ENCODE measurements at regions of chr12 and their contacts with region 1.

Region 1: DNA sequence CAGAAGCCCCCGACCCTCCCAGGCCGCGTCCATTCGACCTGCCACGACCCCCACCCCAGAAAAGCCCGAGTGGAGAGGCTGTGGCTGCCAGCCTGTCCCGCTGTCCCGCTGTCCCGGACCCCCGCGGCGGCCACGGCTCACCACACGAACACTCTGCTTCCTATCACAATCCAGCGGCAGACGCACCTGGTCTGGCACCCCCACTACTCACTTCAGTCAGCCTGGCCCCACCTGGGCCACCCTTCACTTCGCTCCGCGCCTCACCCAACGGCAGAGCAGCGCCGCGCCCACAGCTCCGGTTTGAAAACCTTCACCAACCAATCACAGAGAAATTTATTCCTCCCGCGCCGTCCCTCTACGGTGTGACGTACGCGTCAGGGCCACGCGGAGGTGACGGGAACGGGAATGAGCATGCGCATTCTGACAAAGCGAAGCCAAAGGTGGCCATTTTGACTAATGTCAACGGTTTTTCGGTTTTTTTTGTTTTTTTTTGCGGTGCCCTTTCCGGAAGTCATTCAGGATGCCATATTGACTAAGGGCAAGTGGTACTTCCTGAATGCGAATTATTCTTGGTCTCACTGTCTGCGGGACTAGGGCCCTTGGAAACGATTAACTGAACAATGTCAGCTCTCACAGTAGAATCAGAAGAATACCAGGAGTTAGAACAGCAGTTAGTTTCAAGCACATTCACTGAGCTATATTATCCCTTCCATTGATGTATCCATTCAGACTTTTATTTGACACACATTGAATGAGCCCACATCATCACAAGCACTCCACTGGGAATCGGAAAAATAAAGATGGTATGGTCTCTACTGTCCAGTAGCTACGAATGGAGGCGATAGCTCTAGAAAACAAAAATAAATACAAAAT is at the start of gene RACGAP1:
- DNase-seq: peak; percentile 77 to 98 (median 97)
- ATAC-seq: peak; percentile 99
- H3K4me3 ChIP-seq: peak within 1 kb of the TSS; percentile 81
- H3K4me3 Mint-ChIP-seq: peak within 1 kb of the TSS; percentile 90 to 99 (median 96)
- H3K27ac ChIP-seq: peak within 1 kb of the TSS; percentile 73
- H3K27ac Mint-ChIP-seq: peak within 1 kb of the TSS; percentile 38 to 97 (median 90)
- H3K4me1 ChIP-seq: peaks cover 0 to 12% of the 10 kb centered on the region in 2 donors
- H3K4me1 Mint-ChIP-seq: peaks cover 10 to 43% (median 18%) of the 10 kb centered on the region in 7 donors
- H3K27me3 ChIP-seq: no peaks in the 10 kb centered on the region
- H3K27me3 Mint-ChIP-seq: peaks cover 0 to 3% (median 0%) of the 10 kb centered on the region in 5 donors
- total RNA-seq, gene RACGAP1: 4.2 to 111 (median 8.0) TPM

Region 2: GRCh38 chr12:49366652-49367380 is 658.6 kb before region 1 on chr12:
- CTCF ChIA-PET with region 1: interaction called, 3 read pairs
- POLR2A ChIA-PET with region 1: no interaction called
- intact Hi-C with region 1: loop called in 1 of 2 experiments (anchors 1 kb)
- DNase-seq: peak; percentile 72 to 95 (median 82)
- ATAC-seq: peak; percentile 90
- H3K4me3 ChIP-seq: peak overlapping the region; percentile 90
- H3K4me3 Mint-ChIP-seq: peak overlapping the region; percentile 71 to 97 (median 88)
- H3K27ac ChIP-seq: peak overlapping the region; percentile 87
- H3K27ac Mint-ChIP-seq: peak overlapping the region; percentile 65 to 97 (median 94)
- H3K4me1 ChIP-seq: peaks cover 0 to 15% of the 10 kb centered on the region in 2 donors
- H3K4me1 Mint-ChIP-seq: peaks cover 11 to 39% (median 31%) of the 10 kb centered on the region in 7 donors
- H3K27me3 ChIP-seq: no peaks in the 10 kb centered on the region
- H3K27me3 Mint-ChIP-seq: peaks cover 0 to 2% (median 0%) of the 10 kb centered on the region in 5 donors

Region 3: DNA sequence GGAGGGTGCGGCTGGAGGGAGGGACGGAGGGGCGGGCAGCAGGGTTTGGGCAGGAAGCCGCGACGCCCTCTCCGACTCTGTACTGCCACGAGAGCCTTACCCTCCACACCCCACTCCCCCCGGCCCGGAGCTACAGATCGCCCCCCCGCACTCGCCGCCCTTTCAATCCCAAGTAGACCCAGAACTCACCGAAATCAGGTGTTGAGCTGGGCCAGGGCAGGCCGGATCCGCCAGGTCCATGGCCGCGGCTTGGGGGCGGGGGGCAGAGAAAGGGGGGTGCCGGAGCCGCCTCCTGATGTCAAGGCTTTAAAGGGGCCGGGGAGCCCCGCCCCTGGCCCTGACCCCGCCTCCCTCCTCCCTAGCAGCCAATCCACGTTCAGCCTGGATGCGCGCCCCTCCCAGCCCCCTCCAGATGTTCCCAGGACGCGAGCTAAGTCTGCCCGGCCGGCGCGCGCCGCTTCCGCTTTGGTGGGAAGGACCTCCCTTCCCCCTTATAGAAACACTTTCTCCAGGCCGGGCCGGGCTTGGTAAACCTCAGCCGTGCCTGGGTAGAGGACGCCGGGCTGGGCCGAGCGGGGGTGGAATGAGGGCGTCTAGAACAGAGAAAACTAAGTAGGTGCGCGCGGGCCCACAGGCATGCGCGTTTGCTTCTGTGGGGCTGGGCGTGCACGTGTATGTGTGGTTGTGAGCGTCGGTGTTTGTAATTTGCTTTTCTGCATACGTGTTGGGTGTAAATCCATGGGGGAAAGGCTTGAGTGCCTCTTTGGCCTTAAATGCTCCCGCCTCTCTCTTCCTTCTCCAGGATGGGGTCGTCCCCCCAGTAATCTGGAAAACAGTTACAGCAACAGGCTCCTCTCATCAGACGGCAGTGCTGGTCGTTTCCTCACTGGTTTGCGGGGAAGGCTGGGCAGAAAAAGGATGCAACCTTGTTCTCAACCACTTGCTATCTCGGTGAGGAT is 197.0 kb before region 1 on chr12 and contains the start of gene NCKAP5L:
- CTCF ChIA-PET with region 1: no interaction called
- POLR2A ChIA-PET with region 1: no interaction called
- intact Hi-C with region 1: loop called (anchors 1 to 5 kb)
- DNase-seq: peak; percentile 86 to 94 (median 93)
- ATAC-seq: peak; percentile 96
- H3K4me3 ChIP-seq: peak within 1 kb of the TSS; percentile 82
- H3K4me3 Mint-ChIP-seq: peak within 1 kb of the TSS; percentile 88 to 99 (median 96)
- H3K27ac ChIP-seq: peak within 1 kb of the TSS; percentile 79
- H3K27ac Mint-ChIP-seq: peak within 1 kb of the TSS; percentile 89 to 99 (median 95)
- H3K4me1 ChIP-seq: peaks cover 8 to 16% of the 10 kb centered on the region in 2 donors
- H3K4me1 Mint-ChIP-seq: peaks cover 7 to 42% (median 30%) of the 10 kb centered on the region in 7 donors
- H3K27me3 ChIP-seq: no peaks in the 10 kb centered on the region
- H3K27me3 Mint-ChIP-seq: peaks cover 0 to 13% (median 0%) of the 10 kb centered on the region in 5 donors
- total RNA-seq, gene NCKAP5L: 4.3 to 27.5 (median 12.0) TPM

Region 4: DNA sequence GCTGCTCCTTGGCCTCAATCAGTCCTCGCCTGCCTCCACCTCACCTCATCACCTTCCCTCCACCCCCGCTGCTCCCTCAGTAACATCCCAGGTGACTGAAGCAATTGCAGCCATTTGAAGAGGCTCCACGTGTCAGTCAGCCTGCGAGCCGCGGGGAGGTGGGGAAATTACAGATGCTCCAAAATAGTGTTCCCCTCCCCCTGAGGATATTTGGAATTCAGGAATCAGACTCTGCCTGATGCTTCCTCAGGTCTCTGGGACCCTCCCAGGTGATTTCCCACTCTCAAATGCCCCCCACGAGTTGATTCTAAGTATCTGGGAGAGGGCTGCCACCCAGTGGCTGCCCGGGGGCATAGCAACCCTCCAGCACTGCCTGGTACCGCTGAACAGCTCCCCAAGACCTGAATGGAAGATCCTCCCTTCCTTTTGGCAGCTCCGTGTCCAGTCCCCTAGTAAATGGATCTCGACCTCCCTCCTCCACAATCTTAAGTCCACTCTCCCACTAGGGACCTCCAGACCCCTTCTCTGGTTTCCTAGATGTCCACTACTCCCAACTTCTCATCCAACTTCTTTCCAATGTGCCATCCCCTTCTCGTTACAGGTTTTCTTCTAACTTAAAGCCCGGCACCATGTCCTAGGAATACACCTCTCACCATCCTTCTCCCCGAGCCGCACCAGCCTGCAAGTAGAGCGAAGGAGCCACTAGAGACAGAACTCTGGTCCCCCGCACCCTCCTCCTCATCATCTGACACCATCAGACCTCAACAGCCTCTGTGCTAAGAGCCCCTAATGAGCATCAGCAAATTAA is 30.6 kb after region 1 on chr12:
- CTCF ChIA-PET with region 1: interaction called, 3 read pairs
- POLR2A ChIA-PET with region 1: no interaction called
- intact Hi-C with region 1: loop called in 1 of 2 experiments (anchors 1 kb)
- DNase-seq: peak; percentile 41 to 64 (median 56)
- ATAC-seq: peak; percentile 79
- H3K4me3 ChIP-seq: peak overlapping the region; percentile 42
- H3K4me3 Mint-ChIP-seq: peak overlapping the region; percentile 66 to 96 (median 92)
- H3K27ac ChIP-seq: no peak overlapping the region
- H3K27ac Mint-ChIP-seq: peak overlapping the region in 2 of 9 donors; percentile 46 to 57
- H3K4me1 ChIP-seq: peaks cover 7 to 31% of the 10 kb centered on the region in 2 donors
- H3K4me1 Mint-ChIP-seq: peaks cover 17 to 48% (median 41%) of the 10 kb centered on the region in 7 donors
- H3K27me3 ChIP-seq: peaks cover 0 to 9% of the 10 kb centered on the region in 2 donors
- H3K27me3 Mint-ChIP-seq: peaks cover 38 to 56% (median 48%) of the 10 kb centered on the region in 5 donors

Region 5: GRCh38 chr12:50167041-50167828 is 141.8 kb after region 1 on chr12 and contains the start of gene CERS5:
- CTCF ChIA-PET with region 1: no interaction called
- POLR2A ChIA-PET with region 1: interaction called, 3 read pairs
- intact Hi-C with region 1: loop called (anchors 1 to 2 kb)
- DNase-seq: peak; percentile 87 to 98 (median 93)
- ATAC-seq: peak; percentile 99
- H3K4me3 ChIP-seq: peak within 1 kb of the TSS; percentile 69
- H3K4me3 Mint-ChIP-seq: peak within 1 kb of the TSS; percentile 82 to 98 (median 93)
- H3K27ac ChIP-seq: peak within 1 kb of the TSS; percentile 93
- H3K27ac Mint-ChIP-seq: peak within 1 kb of the TSS; percentile 84 to 98 (median 93)
- H3K4me1 ChIP-seq: peaks cover 11 to 13% of the 10 kb centered on the region in 2 donors
- H3K4me1 Mint-ChIP-seq: peaks cover 16 to 36% (median 30%) of the 10 kb centered on the region in 7 donors
- H3K27me3 ChIP-seq: no peaks in the 10 kb centered on the region
- H3K27me3 Mint-ChIP-seq: no peaks in the 10 kb centered on the region
- total RNA-seq, gene CERS5: 41.0 to 52.2 (median 47.7) TPM

Region 6: GRCh38 chr12:50187084-50187900 is 161.9 kb after region 1 on chr12:
- CTCF ChIA-PET with region 1: no interaction called
- POLR2A ChIA-PET with region 1: no interaction called
- intact Hi-C with region 1: no loop called
- DNase-seq: peak in 1 of 9 donors; percentile 49
- ATAC-seq: peak; percentile 37
- H3K4me3 ChIP-seq: no peak overlapping the region
- H3K4me3 Mint-ChIP-seq: peak overlapping the region in 1 of 10 donors; percentile 70
- H3K27ac ChIP-seq: no peak overlapping the region
- H3K27ac Mint-ChIP-seq: peak overlapping the region in 6 of 9 donors; percentile 10 to 92 (median 71)
- H3K4me1 ChIP-seq: peaks cover 0 to 4% of the 10 kb centered on the region in 2 donors
- H3K4me1 Mint-ChIP-seq: peaks cover 12 to 57% (median 14%) of the 10 kb centered on the region in 7 donors
- H3K27me3 ChIP-seq: no peaks in the 10 kb centered on the region
- H3K27me3 Mint-ChIP-seq: no peaks in the 10 kb centered on the region

Region 7: GRCh38 chr12:50458606-50459005 is 433.2 kb after region 1 on chr12:
- CTCF ChIA-PET with region 1: no interaction called
- POLR2A ChIA-PET with region 1: no interaction called
- intact Hi-C with region 1: no loop called
- DNase-seq: no peak
- ATAC-seq: no peak
- H3K4me3 ChIP-seq: no peak overlapping the region
- H3K4me3 Mint-ChIP-seq: no peak overlapping the region
- H3K27ac ChIP-seq: no peak overlapping the region
- H3K27ac Mint-ChIP-seq: no peak overlapping the region
- H3K4me1 ChIP-seq: no peaks in the 10 kb centered on the region
- H3K4me1 Mint-ChIP-seq: peaks cover 0 to 4% (median 0%) of the 10 kb centered on the region in 7 donors
- H3K27me3 ChIP-seq: no peaks in the 10 kb centered on the region
- H3K27me3 Mint-ChIP-seq: no peaks in the 10 kb centered on the region

Region 8: GRCh38 chr12:51172515-51173431 is 1147.3 kb after region 1 on chr12 and contains the start of gene TFCP2:
- CTCF ChIA-PET with region 1: no interaction called
- POLR2A ChIA-PET with region 1: no interaction called
- intact Hi-C with region 1: loop called in 1 of 2 experiments (anchors 10 kb)
- DNase-seq: peak; percentile 81 to 93 (median 91)
- ATAC-seq: peak; percentile 98
- H3K4me3 ChIP-seq: peak within 1 kb of the TSS; percentile 98
- H3K4me3 Mint-ChIP-seq: peak within 1 kb of the TSS in 5 of 10 donors; percentile 77 to 89 (median 87)
- H3K27ac ChIP-seq: peak within 1 kb of the TSS; percentile 99
- H3K27ac Mint-ChIP-seq: peak within 1 kb of the TSS in 6 of 9 donors; percentile 56 to 90 (median 82)
- H3K4me1 ChIP-seq: peaks cover 5 to 7% of the 10 kb centered on the region in 2 donors
- H3K4me1 Mint-ChIP-seq: peaks cover 9 to 24% (median 14%) of the 10 kb centered on the region in 7 donors
- H3K27me3 ChIP-seq: no peaks in the 10 kb centered on the region
- H3K27me3 Mint-ChIP-seq: no peaks in the 10 kb centered on the region
- total RNA-seq, gene TFCP2: 23.4 to 42.3 (median 36.6) TPM